ENCODE measurements at regions of chr3 and their contacts with region 1.

Region 1: DNA sequence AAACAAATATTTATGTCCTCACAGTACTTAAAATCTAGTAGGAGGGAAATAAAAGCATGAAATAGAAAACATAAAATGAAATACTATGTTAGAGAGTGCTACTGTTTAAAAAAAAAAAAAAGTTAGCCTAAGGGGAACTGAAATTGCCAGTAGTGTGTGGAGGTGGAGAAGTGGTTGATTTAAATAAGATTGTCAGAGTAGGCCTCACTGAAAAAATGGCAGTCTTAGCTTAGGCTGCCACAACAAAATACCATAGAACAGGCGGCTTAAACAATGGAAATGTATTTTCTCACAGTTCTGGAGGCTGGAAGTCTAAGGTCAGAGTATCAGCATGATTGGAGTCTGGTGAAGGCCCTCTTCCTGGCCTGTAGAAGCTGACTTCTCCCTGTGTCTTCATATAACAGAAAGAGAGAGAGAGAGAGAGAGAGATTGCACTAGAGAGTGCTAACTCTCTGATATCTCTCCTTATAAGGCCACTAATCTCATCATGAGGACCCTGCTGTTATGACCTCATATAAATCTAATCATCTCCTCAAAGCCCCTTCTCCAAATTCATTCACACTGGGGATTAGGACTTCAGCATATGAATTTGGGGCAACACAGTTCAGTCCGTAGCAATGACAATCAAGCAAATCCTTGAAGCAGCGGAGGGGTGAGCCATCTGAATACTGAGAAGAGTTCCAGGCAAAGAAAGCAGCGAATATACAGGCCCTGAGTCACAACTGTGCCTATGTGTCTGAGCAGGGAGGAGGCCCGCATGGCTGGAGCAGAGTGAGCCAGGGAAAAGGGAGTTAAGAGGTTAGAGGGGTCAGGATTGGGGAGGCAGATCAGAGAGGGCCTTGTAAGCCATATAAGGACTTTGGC is 23.6 kb upstream of the LRRC34 start:
- DNase-seq: no peak
- ATAC-seq: peak; percentile 93
- H3K4me3 Mint-ChIP-seq: peak overlapping the region; percentile 44
- H3K27ac Mint-ChIP-seq: peak overlapping the region; percentile 97
- H3K4me1 Mint-ChIP-seq: peaks cover 38% of the 10 kb centered on the region
- H3K27me3 Mint-ChIP-seq: no peaks in the 10 kb centered on the region
- CTCF ChIP-seq: no peak

Region 2: GRCh38 chr3:169846458-169847193 is 10.3 kb after region 1 on chr3:
- CTCF ChIA-PET with region 1: interaction called, 5 read pairs
- POLR2A ChIA-PET with region 1: interaction called, 12 read pairs
- intact Hi-C with region 1: loop called (anchors 1 kb)
- DNase-seq: no peak
- ATAC-seq: peak; percentile 95
- H3K4me3 Mint-ChIP-seq: peak overlapping the region; percentile 67
- H3K27ac Mint-ChIP-seq: peak overlapping the region; percentile 92
- H3K4me1 Mint-ChIP-seq: peaks cover 57% of the 10 kb centered on the region
- H3K27me3 Mint-ChIP-seq: no peaks in the 10 kb centered on the region
- CTCF ChIP-seq: no peak

Region 3: DNA sequence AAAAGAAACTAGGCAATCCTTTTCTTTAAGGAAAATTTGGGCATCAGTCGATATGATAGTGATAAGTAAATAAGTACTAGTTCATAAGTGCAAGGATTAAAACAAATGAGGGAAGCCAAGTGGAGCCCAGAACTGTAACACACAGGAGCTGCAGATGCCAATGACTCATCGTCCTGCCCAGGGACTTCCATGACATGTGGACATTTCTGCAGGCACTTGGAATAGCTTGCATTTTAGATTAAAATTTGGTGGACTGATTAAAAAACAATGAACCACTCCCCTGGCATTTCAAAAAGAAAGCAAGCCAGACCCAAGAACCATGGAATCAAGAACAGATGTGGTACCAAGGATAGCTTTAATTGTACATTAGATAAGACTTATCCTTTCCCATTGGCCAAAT is 78.0 kb after region 1 on chr3:
- CTCF ChIA-PET with region 1: no interaction called
- POLR2A ChIA-PET with region 1: no interaction called
- intact Hi-C with region 1: no loop called
- DNase-seq: no peak
- ATAC-seq: no peak
- H3K4me3 Mint-ChIP-seq: no peak overlapping the region
- H3K27ac Mint-ChIP-seq: no peak overlapping the region
- H3K4me1 Mint-ChIP-seq: peaks cover 6% of the 10 kb centered on the region
- H3K27me3 Mint-ChIP-seq: no peaks in the 10 kb centered on the region
- CTCF ChIP-seq: no peak